Activated naive CD4-positive, alpha-beta T cell treated with anti-CD3 and anti-CD28 coated beads for 36 hours (primary cell): ENCODE measurements at regions of chr5 and their contacts with region 1.

Region 1: GRCh38 chr5:180291943-180292831 is at the start of gene MAPK9:
- DNase-seq: peak; percentile 83
- H3K4me3 Mint-ChIP-seq: peak within 1 kb of the TSS; percentile 94
- H3K27ac Mint-ChIP-seq: peak within 1 kb of the TSS; percentile 90
- H3K4me1 Mint-ChIP-seq: peaks cover 32% of the 10 kb centered on the region
- H3K27me3 Mint-ChIP-seq: no peaks in the 10 kb centered on the region
- total RNA-seq, gene MAPK9: 30.8 to 34.4 TPM

Region 2: GRCh38 chr5:180315762-180316212 is 23.6 kb after region 1 on chr5:
- CTCF ChIA-PET with region 1: interaction called, 77 read pairs
- intact Hi-C with region 1: loop called (anchors 1 kb)
- DNase-seq: peak; percentile 81
- H3K4me3 Mint-ChIP-seq: no peak overlapping the region
- H3K27ac Mint-ChIP-seq: no peak overlapping the region
- H3K4me1 Mint-ChIP-seq: no peaks in the 10 kb centered on the region
- H3K27me3 Mint-ChIP-seq: no peaks in the 10 kb centered on the region

Region 3: GRCh38 chr5:180353048-180353979 is 61.1 kb after region 1 on chr5 and contains the start of gene GFPT2:
- CTCF ChIA-PET with region 1: interaction called, 3 read pairs
- intact Hi-C with region 1: loop called (anchors 1 kb)
- DNase-seq: peak; percentile 69
- H3K4me3 Mint-ChIP-seq: peak within 1 kb of the TSS; percentile 62
- H3K27ac Mint-ChIP-seq: no peak within 1 kb of the TSS
- H3K4me1 Mint-ChIP-seq: peaks cover 7% of the 10 kb centered on the region
- H3K27me3 Mint-ChIP-seq: peaks cover 48% of the 10 kb centered on the region
- total RNA-seq, gene GFPT2: 0.22 to 0.33 TPM

Region 4: DNA sequence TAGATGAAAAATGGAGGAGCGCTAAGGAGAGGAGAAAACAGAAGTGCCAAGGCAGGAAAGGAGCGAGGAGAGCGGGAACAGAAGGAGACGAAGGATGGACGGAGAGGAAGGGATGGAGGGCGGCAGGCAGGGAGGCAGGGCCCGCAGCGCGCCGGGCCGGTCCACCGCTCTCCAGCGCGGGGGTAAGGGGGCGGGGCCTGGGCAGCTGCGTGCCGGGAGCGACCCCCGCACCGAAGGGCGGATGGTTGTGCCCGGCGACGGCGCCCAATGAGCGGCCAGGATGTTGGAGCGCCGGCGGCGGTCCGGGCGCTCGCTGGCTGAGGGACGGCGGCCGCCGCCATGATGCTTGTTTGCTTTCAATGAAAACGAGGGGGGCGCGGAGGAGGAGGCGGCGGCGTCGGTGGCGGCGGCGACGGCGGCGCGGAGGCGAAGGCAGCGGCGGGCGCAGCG is 201.9 kb after region 1 on chr5 and contains the start of gene CNOT6:
- CTCF ChIA-PET with region 1: no interaction called
- intact Hi-C with region 1: loop called (anchors 1 kb)
- DNase-seq: peak; percentile 92
- H3K4me3 Mint-ChIP-seq: peak within 1 kb of the TSS; percentile 82
- H3K27ac Mint-ChIP-seq: peak within 1 kb of the TSS; percentile 85
- H3K4me1 Mint-ChIP-seq: peaks cover 31% of the 10 kb centered on the region
- H3K27me3 Mint-ChIP-seq: no peaks in the 10 kb centered on the region
- total RNA-seq, gene CNOT6: 33.3 to 34.0 TPM

Region 5: GRCh38 chr5:180670586-180671359 is 378.6 kb after region 1 on chr5:
- CTCF ChIA-PET with region 1: no interaction called
- intact Hi-C with region 1: loop called (anchors 1 kb)
- DNase-seq: peak; percentile 79
- H3K4me3 Mint-ChIP-seq: peak overlapping the region; percentile 10
- H3K27ac Mint-ChIP-seq: no peak overlapping the region
- H3K4me1 Mint-ChIP-seq: peaks cover 15% of the 10 kb centered on the region
- H3K27me3 Mint-ChIP-seq: peaks cover 7% of the 10 kb centered on the region